Panc1 (cell line): ENCODE measurements at regions of chr3 and their contacts with region 1.

Region 1: DNA sequence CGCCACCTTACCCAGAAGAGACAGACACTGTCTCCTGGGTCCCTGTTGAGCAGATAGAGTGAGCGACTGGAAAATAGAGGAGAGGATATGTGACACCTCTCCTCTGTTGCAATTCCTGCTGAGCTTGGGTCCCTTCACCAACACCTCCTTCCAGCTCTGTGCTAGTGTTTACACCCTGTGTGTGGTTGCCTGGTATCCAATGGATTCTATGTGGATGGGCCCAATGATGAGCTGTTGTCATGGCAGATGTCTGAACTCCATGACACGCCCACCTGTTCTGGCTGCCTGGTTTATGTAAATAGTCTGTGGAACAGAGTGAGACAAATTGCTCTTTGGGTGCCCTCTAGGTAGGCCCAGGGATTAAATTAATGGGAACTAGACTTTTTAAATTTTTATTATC is 23.7 kb downstream of the RBM5 start:
- DNase-seq: no peak
- ATAC-seq: peak; percentile 43; the same call in 1 of the 2 replicates
- H3K4me3 ChIP-seq: no peak overlapping the region
- H3K27ac ChIP-seq: no peak overlapping the region
- H3K4me1 ChIP-seq: no peaks in the 10 kb centered on the region
- H3K27me3 ChIP-seq: no peaks in the 10 kb centered on the region
- CTCF ChIP-seq: no peak

Region 2: DNA sequence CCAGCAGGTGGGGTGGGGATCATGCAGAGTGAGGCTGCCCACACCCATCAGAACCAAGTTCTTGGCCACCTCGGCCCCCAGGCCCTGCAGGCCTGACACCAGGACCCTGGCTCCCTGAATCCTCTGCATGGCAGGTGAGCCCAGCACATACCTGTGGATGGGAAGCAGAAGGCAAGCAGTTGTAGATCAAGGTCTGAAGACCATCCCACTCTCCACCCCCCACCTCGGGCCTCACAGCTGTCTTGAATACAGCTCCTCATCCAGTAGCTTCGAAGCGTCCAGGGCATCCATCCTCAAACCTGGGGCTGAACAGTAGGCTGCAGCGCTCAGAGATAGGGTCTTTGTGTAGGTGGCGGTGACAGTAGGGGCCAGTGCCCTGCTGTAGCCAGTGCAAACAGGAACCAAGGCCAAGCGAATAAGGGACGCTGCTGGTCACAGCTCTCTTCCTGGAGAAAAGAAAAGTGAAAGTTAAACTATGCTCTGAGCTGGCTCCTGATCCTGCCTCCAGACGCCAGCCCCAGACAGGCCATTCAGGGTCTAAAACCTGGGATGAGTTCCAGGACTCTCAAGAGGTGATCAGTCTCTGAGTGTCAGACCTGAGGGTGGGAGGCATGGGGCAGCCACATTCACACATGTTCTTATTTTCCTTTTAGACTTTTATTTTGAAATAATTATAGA is 298.8 kb before region 1 on chr3 and contains the start of gene UBA7:
- CTCF ChIA-PET with region 1: no interaction called
- POLR2A ChIA-PET with region 1: interaction called, 20 read pairs
- in situ Hi-C with region 1: no loop called
- intact Hi-C with region 1: no loop called
- DNase-seq: no peak
- ATAC-seq: peak; percentile 86
- H3K4me3 ChIP-seq: peak within 1 kb of the TSS; percentile 13 to 37
- H3K27ac ChIP-seq: peak within 1 kb of the TSS; percentile 51
- H3K4me1 ChIP-seq: no peaks in the 10 kb centered on the region
- H3K27me3 ChIP-seq: no peaks in the 10 kb centered on the region
- CTCF ChIP-seq: no peak
- total RNA-seq, gene UBA7: 12.5 TPM

Region 3: DNA sequence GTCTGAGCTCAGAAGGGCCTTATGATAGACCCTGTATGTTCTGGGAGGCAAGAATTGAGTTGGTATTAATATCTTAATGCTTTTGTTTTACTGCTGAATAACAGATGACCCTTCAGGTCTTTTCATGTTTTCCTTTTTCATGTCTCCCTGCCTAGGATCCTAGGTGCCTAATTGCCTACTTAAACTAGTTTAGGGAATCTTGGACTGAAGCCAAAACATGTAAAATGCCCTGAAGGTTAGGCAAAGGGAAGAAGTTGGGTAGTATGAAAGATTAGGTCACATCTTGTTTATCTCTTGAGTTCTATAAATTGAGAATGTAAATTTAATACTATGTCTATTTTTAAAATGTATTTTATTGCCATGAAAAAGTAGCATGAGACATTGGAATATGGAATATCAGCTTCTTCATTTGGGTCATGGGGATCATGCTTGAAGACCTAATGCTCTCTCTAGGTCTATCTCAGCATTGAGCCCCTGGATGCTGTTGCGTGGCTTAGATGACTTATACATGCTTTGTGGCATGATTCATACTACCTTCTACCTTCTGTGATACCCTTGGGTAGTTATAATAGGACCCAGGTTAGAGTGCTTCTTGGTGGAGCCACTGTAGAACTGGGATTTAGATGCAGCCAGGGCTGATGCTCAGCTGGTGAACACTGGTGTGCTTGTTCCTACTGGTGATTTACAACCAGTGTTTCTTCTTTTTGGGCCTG is 146.1 kb before region 1 on chr3:
- CTCF ChIA-PET with region 1: no interaction called
- POLR2A ChIA-PET with region 1: no interaction called
- in situ Hi-C with region 1: no loop called
- intact Hi-C with region 1: no loop called
- DNase-seq: no peak
- ATAC-seq: no peak
- H3K4me3 ChIP-seq: no peak overlapping the region
- H3K27ac ChIP-seq: no peak overlapping the region
- H3K4me1 ChIP-seq: no peaks in the 10 kb centered on the region
- H3K27me3 ChIP-seq: no peaks in the 10 kb centered on the region
- CTCF ChIP-seq: no peak